ENCODE measurements at regions of chr17 and their contacts with region 1.

Region 1: GRCh38 chr17:7219812-7220581 is at the starts of genes ACADVL and DLG4:
- DNase-seq: peak; percentile 77 to 80
- H3K4me3 ChIP-seq: peak within 1 kb of the TSS; percentile 80
- H3K4me3 Mint-ChIP-seq: peak within 1 kb of the TSS; percentile 77
- H3K27ac Mint-ChIP-seq: peak within 1 kb of the TSS; percentile 73
- H3K4me1 ChIP-seq: peaks cover 10% of the 10 kb centered on the region
- H3K4me1 Mint-ChIP-seq: peaks cover 5% of the 10 kb centered on the region
- H3K27me3 ChIP-seq: no peaks in the 10 kb centered on the region
- H3K27me3 Mint-ChIP-seq: no peaks in the 10 kb centered on the region
- CTCF ChIP-seq: no peak
- total RNA-seq, gene ACADVL: 133 and 164 TPM in 2 replicates
- total RNA-seq, gene DLG4: 0.98 and 1.8 TPM in 2 replicates

Region 2: DNA sequence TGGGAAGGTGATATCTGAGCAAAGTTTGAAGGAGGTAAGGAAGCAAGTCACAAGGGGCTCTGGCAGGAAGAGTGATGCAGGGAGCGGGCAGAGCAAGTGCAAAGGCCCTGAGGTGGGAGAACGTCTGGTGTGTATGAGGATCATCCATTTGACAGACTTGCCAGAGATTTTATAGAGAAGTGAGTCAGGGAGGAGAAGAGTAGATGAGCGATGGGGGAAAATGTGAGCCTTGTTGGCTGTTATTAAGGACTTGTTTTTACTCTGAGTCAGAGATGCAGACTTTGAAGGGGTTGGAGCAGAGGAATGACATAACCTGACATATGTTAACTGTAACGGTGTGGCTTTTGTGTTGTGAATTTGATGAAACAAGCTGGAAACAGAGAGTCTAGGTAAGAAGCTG is 136.4 kb before region 1 on chr17:
- CTCF ChIA-PET with region 1: no interaction called
- POLR2A ChIA-PET with region 1: interaction called, 17 read pairs
- intact Hi-C with region 1: no loop called
- DNase-seq: no peak
- H3K4me3 ChIP-seq: no peak overlapping the region
- H3K4me3 Mint-ChIP-seq: no peak overlapping the region
- H3K27ac Mint-ChIP-seq: no peak overlapping the region
- H3K4me1 ChIP-seq: peaks cover 5% of the 10 kb centered on the region; the same call in 1 of the 2 replicates
- H3K4me1 Mint-ChIP-seq: peaks cover 16% of the 10 kb centered on the region
- H3K27me3 ChIP-seq: no peaks in the 10 kb centered on the region
- H3K27me3 Mint-ChIP-seq: no peaks in the 10 kb centered on the region
- CTCF ChIP-seq: no peak

Region 3: DNA sequence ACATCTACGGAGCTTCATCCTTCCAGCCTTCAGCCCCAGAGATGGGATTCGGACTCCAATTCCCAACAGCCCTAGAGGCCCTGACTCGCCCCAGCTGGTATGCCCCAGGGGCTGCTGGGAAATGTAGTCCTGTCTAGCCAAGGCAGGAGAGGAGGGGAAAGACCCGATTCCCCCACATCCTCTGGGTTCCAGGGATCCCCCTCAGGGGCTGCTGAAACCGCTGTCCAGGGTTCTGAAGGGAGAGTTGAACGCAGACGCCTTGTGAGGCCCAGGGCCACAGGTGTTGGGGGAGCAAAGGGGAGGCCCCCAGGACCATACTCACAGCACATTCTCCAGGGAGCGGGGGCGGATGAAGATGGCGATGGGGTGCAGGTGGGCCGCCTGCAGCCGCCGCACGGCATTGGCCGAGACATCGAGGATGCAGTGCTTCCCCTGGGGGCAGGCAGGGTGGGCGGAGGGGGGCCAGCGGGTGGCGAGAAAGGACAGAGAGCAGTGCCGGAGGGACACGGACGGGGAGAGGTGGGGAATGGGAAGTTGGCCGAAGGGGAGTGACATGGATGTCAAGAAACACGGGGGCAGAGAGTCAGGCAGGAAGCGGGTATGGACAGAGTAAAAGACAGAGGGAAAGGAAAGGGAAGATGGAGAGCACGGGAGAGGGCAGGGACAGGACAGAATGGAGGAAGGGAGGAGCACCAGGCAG is 28.3 kb before region 1 on chr17:
- CTCF ChIA-PET with region 1: interaction called, 3 read pairs
- POLR2A ChIA-PET with region 1: interaction called, 3 read pairs
- intact Hi-C with region 1: loop called (anchors 1 kb)
- DNase-seq: peak; percentile 74 to 80
- H3K4me3 ChIP-seq: no peak overlapping the region
- H3K4me3 Mint-ChIP-seq: peak overlapping the region; percentile 22
- H3K27ac Mint-ChIP-seq: peak overlapping the region; percentile 59
- H3K4me1 ChIP-seq: peaks cover 4% of the 10 kb centered on the region
- H3K4me1 Mint-ChIP-seq: no peaks in the 10 kb centered on the region
- H3K27me3 ChIP-seq: no peaks in the 10 kb centered on the region
- H3K27me3 Mint-ChIP-seq: no peaks in the 10 kb centered on the region
- CTCF ChIP-seq: no peak

Region 4: GRCh38 chr17:7261172-7261927 is 41.4 kb after region 1 on chr17:
- CTCF ChIA-PET with region 1: no interaction called
- POLR2A ChIA-PET with region 1: no interaction called
- intact Hi-C with region 1: no loop called
- DNase-seq: peak; percentile 77 to 83
- H3K4me3 ChIP-seq: peak overlapping the region; percentile 98
- H3K4me3 Mint-ChIP-seq: peak overlapping the region; percentile 99
- H3K27ac Mint-ChIP-seq: peak overlapping the region; percentile 97
- H3K4me1 ChIP-seq: peaks cover 26% of the 10 kb centered on the region
- H3K4me1 Mint-ChIP-seq: peaks cover 9% of the 10 kb centered on the region
- H3K27me3 ChIP-seq: no peaks in the 10 kb centered on the region
- H3K27me3 Mint-ChIP-seq: no peaks in the 10 kb centered on the region
- CTCF ChIP-seq: no peak

Measured in Caco-2 (cell line).